Activated CD4-positive, alpha-beta T cell treated with anti-CD3 and anti-CD28 coated beads for 36 hours (primary cell): ENCODE measurements at regions of chr11 and their contacts with region 1.

Region 1: GRCh38 chr11:27497284-27497866 is 9.2 kb downstream of the LIN7C start:
- DNase-seq: no peak
- ATAC-seq: no peak
- H3K4me3 Mint-ChIP-seq: no peak overlapping the region
- H3K27ac Mint-ChIP-seq: no peak overlapping the region
- H3K4me1 Mint-ChIP-seq: peaks cover 13% of the 10 kb centered on the region
- H3K27me3 Mint-ChIP-seq: no peaks in the 10 kb centered on the region

Region 2: GRCh38 chr11:26753723-26754504 is 743.5 kb before region 1 on chr11:
- CTCF ChIA-PET with region 1: interaction called, 3 read pairs
- POLR2A ChIA-PET with region 1: no interaction called
- intact Hi-C with region 1: loop called in 1 of 2 experiments (anchors 5 kb)
- DNase-seq: peak; percentile 27
- ATAC-seq: no peak
- H3K4me3 Mint-ChIP-seq: no peak overlapping the region
- H3K27ac Mint-ChIP-seq: no peak overlapping the region
- H3K4me1 Mint-ChIP-seq: no peaks in the 10 kb centered on the region
- H3K27me3 Mint-ChIP-seq: no peaks in the 10 kb centered on the region

Region 3: DNA sequence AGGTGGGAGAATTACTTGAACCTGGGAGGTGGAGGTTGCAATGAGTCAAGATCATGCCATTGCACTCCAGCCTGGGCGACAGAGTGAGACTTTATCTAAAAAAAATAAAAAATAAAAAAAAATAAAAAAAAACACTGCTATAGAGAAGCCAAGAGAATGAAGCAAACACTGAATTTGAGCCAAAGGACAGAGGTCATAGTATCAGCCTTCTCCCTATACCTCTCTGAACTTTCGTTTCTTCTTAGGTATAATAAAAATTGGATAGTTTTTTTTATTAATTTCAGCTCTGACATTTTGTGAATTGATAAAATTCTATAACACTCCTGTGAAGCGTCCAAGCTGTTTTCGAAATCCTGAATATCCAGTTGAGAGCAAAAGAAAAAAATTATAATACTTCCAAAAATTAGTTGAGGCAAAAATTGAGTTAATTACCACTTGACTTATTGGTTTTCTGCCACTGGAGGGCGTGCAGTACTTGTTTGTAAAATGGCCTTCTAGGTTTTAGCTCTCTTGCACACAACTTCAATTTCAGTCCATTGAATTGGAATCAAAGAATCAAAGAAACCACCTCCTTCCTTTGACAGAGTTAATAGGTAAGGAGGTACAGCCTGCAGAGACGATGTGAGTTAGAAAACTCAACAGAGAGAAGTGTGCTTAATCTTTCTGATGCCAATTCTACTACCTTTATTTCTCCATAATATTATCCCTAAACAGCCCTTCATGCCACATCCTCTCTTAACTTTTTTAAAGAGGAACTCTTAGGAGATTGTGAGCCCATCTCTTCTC is 313.5 kb before region 1 on chr11:
- CTCF ChIA-PET with region 1: interaction called, 14 read pairs
- POLR2A ChIA-PET with region 1: no interaction called
- intact Hi-C with region 1: no loop called
- DNase-seq: peak; percentile 66
- ATAC-seq: no peak
- H3K4me3 Mint-ChIP-seq: no peak overlapping the region
- H3K27ac Mint-ChIP-seq: no peak overlapping the region
- H3K4me1 Mint-ChIP-seq: no peaks in the 10 kb centered on the region
- H3K27me3 Mint-ChIP-seq: peaks cover 21% of the 10 kb centered on the region

Region 4: GRCh38 chr11:27477831-27478230 is 19.5 kb before region 1 on chr11:
- CTCF ChIA-PET with region 1: interaction called, 107 read pairs
- POLR2A ChIA-PET with region 1: interaction called, 3 read pairs
- intact Hi-C with region 1: no loop called
- DNase-seq: no peak
- ATAC-seq: no peak
- H3K4me3 Mint-ChIP-seq: no peak overlapping the region
- H3K27ac Mint-ChIP-seq: no peak overlapping the region
- H3K4me1 Mint-ChIP-seq: peaks cover 3% of the 10 kb centered on the region
- H3K27me3 Mint-ChIP-seq: peaks cover 8% of the 10 kb centered on the region

Region 5: GRCh38 chr11:27660171-27660570 is 162.8 kb after region 1 on chr11:
- CTCF ChIA-PET with region 1: no interaction called
- POLR2A ChIA-PET with region 1: no interaction called
- intact Hi-C with region 1: no loop called
- DNase-seq: no peak
- ATAC-seq: no peak
- H3K4me3 Mint-ChIP-seq: no peak overlapping the region
- H3K27ac Mint-ChIP-seq: no peak overlapping the region
- H3K4me1 Mint-ChIP-seq: no peaks in the 10 kb centered on the region
- H3K27me3 Mint-ChIP-seq: no peaks in the 10 kb centered on the region